SK-N-SH (cell line): ENCODE measurements at regions of chr14 and their contacts with region 1.

Region 1: DNA sequence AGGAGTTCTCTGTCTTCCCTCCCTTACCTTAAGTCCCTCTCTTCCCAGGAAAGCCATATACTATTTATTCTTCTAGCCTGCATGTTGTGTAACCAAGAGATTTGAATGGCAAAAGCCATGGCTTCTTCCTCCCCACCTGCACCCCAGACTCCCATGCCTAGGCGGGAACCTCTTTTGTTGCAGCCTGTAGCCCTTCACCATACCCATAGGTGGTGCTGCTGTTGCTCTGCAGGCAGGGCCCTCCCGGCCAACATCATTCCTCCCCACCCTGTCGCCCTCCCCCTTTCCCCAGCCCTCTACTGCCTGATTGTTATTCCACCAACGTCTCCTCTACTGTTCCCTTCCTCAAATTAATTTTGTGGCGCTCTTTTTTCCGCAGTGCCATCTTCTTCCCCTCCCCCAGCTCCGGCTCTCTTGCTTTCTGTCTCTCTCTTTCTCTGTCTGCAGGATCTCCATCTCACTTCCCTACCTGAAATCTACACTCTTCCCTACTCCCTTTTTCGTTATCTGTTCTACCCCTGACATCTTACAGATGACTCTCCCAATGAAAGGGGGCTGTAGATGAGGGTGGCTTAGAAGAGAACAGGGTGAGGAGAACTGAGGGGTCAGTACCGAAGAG is 13.8 kb downstream of the NGDN start:
- DNase-seq: peak; percentile 81
- H3K4me3 ChIP-seq: peak overlapping the region in 1 of 2 experiments; percentile 32; a peak in 1 of 4 replicates
- H3K27ac ChIP-seq: no peak overlapping the region
- H3K4me1 ChIP-seq: no peaks in the 10 kb centered on the region
- H3K27me3 ChIP-seq: no peaks in the 10 kb centered on the region
- CTCF ChIP-seq: peak; percentile 53
- EP300 ChIP-seq: no peak
- RAD21 ChIP-seq: peak; percentile 86

Region 2: GRCh38 chr14:23269193-23269592 is 214.2 kb before region 1 on chr14:
- CTCF ChIA-PET with region 1: no interaction called
- POLR2A ChIA-PET with region 1: no interaction called
- DNase-seq: no peak
- H3K4me3 ChIP-seq: no peak overlapping the region
- H3K27ac ChIP-seq: no peak overlapping the region
- H3K4me1 ChIP-seq: no peaks in the 10 kb centered on the region; a peak in 2 of 4 replicates
- H3K27me3 ChIP-seq: no peaks in the 10 kb centered on the region
- CTCF ChIP-seq: no peak
- EP300 ChIP-seq: no peak
- RAD21 ChIP-seq: no peak

Region 3: GRCh38 chr14:23469127-23469905 is 14.0 kb before region 1 on chr14 and contains the start of gene NGDN:
- CTCF ChIA-PET with region 1: interaction called, 15 read pairs
- POLR2A ChIA-PET with region 1: no interaction called
- DNase-seq: peak; percentile 86
- H3K4me3 ChIP-seq: peak within 1 kb of the TSS; percentile 92 to 96
- H3K27ac ChIP-seq: peak within 1 kb of the TSS; percentile 61 to 88
- H3K4me1 ChIP-seq: peaks cover 0 to 7% of the 10 kb centered on the region in 2 experiments; a peak in 2 of 4 replicates
- H3K27me3 ChIP-seq: no peaks in the 10 kb centered on the region
- CTCF ChIP-seq: peak; percentile 78
- EP300 ChIP-seq: no peak
- RAD21 ChIP-seq: peak; percentile 69
- polyA plus RNA-seq, gene NGDN: 64.3 and 85.9 TPM in 2 replicates

Region 4: DNA sequence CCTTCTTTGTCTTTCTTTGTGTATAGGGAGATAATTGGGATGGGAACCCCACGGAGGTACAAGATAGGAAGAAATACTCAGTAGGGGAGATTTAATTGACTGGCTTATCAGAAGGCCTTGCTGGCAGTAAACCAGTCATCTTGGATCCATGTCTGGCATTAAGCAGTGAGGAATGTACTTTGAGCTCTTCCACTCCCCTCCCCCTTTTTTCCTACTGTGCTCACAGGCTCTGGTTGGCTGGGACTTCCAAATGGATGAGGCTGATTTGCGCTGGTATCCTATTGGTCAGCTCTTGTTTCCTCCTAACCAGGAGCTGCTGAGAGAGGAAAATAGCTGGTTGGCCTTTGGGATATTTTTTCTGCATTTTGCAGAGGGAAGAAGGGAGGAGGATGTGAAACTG is 10.9 kb after region 1 on chr14:
- CTCF ChIA-PET with region 1: interaction called, 54 read pairs
- POLR2A ChIA-PET with region 1: no interaction called
- DNase-seq: peak; percentile 34
- H3K4me3 ChIP-seq: no peak overlapping the region
- H3K27ac ChIP-seq: no peak overlapping the region
- H3K4me1 ChIP-seq: no peaks in the 10 kb centered on the region
- H3K27me3 ChIP-seq: no peaks in the 10 kb centered on the region
- CTCF ChIP-seq: no peak
- EP300 ChIP-seq: no peak
- RAD21 ChIP-seq: no peak

Region 5: DNA sequence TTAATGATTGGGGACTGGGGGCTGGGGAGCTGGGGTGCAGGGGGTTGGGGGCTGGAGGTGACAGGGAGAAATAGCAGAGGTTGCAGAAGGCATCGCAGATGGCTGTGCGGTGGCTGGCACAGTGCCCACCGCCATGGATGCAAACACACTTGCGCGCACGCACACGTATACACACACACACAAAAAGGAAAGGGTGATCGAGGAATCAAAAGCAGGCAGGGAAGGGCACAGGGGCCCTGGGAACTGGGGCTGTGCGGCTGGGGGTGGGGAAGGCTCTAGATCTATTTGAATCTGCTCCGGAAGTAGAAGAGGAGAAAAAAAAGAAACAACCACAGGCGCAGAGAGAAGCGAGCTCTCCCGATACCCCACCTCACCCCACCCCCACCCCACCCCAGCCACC is 28.8 kb after region 1 on chr14:
- CTCF ChIA-PET with region 1: interaction called, 14 read pairs
- POLR2A ChIA-PET with region 1: no interaction called
- DNase-seq: peak; percentile 77
- H3K4me3 ChIP-seq: peak overlapping the region in 1 of 2 experiments; percentile 34; a peak in 2 of 4 replicates
- H3K27ac ChIP-seq: peak overlapping the region in 1 of 2 experiments; percentile 63; a peak in 1 of 4 replicates
- H3K4me1 ChIP-seq: peaks cover 0 to 38% of the 10 kb centered on the region in 2 experiments; a peak in 1 of 4 replicates
- H3K27me3 ChIP-seq: no peaks in the 10 kb centered on the region
- CTCF ChIP-seq: no peak
- EP300 ChIP-seq: no peak
- RAD21 ChIP-seq: no peak

Region 6: GRCh38 chr14:23544511-23545447 is 61.4 kb after region 1 on chr14:
- CTCF ChIA-PET with region 1: interaction called, 276 read pairs
- POLR2A ChIA-PET with region 1: no interaction called
- DNase-seq: no peak
- H3K4me3 ChIP-seq: no peak overlapping the region
- H3K27ac ChIP-seq: peak overlapping the region in 1 of 2 experiments; percentile 29; a peak in 1 of 4 replicates
- H3K4me1 ChIP-seq: peaks cover 0 to 16% of the 10 kb centered on the region in 2 experiments; a peak in 2 of 4 replicates
- H3K27me3 ChIP-seq: no peaks in the 10 kb centered on the region
- CTCF ChIP-seq: no peak
- EP300 ChIP-seq: no peak
- RAD21 ChIP-seq: no peak